GM12878 (cell line): ENCODE measurements at regions of chr22 and their contacts with region 1.

Region 1: DNA sequence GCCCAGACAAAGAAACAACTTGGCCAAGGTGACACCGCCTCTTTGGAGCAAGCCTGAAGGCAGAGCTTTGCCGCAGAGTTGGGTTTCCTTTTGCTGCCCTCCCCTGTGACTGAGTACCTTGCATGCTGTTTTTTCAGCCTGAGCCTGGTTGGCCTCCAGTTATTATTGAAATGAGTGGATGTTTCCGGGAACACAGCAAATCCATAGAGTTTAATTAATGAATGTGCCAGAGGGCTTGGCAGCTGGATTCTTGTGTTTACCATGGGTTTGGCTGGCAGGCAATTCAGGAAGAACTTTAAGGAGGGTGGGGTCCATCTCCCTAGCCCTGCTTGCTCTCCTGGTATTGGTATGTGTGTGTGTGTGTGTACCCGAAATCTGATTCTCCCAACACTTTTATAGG is 65.6 kb upstream of the CRYBB3 start:
- DNase-seq: no peak
- ATAC-seq: no peak
- H3K4me3 ChIP-seq: no peak overlapping the region
- H3K27ac ChIP-seq: no peak overlapping the region
- H3K4me1 ChIP-seq: no peaks in the 10 kb centered on the region
- H3K27me3 ChIP-seq: no peaks in the 10 kb centered on the region
- CTCF ChIP-seq: no peak
- EP300 ChIP-seq: no peak
- POLR2A ChIP-seq: no peak
- RAD21 ChIP-seq: no peak

Region 2: GRCh38 chr22:25172153-25172552 is 38.1 kb after region 1 on chr22:
- CTCF ChIA-PET with region 1: interaction called, 4 read pairs
- POLR2A ChIA-PET with region 1: no interaction called
- RAD21 ChIA-PET with region 1: no interaction called
- SMC1A ChIA-PET with region 1: no interaction called
- in situ Hi-C with region 1: no loop called
- intact Hi-C with region 1: loop called (anchors 5 kb)
- DNase-seq: no peak
- ATAC-seq: peak; percentile 91
- H3K4me3 ChIP-seq: no peak overlapping the region
- H3K27ac ChIP-seq: no peak overlapping the region
- H3K4me1 ChIP-seq: no peaks in the 10 kb centered on the region
- H3K27me3 ChIP-seq: no peaks in the 10 kb centered on the region; a peak in 1 of 4 replicates
- CTCF ChIP-seq: peak; percentile 47 to 76 (median 51)
- EP300 ChIP-seq: no peak
- POLR2A ChIP-seq: no peak
- RAD21 ChIP-seq: peak; percentile 32; the same call in 1 of the 2 replicates